Sigmoid colon (tissue), 7 donors: ENCODE measurements at regions of chr11 and their contacts with region 1.

Region 1: GRCh38 chr11:26931248-26931631 is 62.7 kb upstream of the FIBIN start:
- DNase-seq: no peak
- H3K4me3 ChIP-seq: no peak overlapping the region
- H3K27ac ChIP-seq: peak overlapping the region in 3 of 4 donors; percentile 60 to 82 (median 76)
- H3K4me1 ChIP-seq: peaks cover 0 to 36% (median 34%) of the 10 kb centered on the region in 4 donors
- H3K27me3 ChIP-seq: no peaks in the 10 kb centered on the region
- CTCF ChIP-seq: no peak
- EP300 ChIP-seq: no peak
- POLR2A ChIP-seq: no peak

Region 2: DNA sequence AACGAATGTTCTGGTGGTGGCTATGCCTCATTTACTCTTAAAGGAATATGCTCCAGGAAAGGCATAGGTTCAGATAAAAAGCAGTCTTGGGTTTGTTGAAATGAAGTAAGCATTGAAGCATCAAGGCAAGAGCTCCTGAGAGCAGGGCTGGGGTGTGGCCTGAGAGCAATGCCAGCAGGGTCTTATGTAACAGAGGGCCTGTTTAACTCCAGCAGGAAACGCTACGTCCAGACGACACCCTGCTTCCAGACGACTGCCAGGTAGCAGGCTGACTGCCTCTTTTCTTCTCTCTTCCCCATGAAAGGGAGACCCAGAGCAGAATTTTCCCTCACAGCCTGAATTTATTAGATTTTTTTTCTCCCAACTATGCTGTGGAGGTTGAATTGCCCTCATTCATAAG is 82.2 kb before region 1 on chr11:
- intact Hi-C with region 1: loop called (anchors 5 kb)
- DNase-seq: peak; percentile 81
- H3K4me3 ChIP-seq: no peak overlapping the region
- H3K27ac ChIP-seq: peak overlapping the region; percentile 31 to 68 (median 60)
- H3K4me1 ChIP-seq: peaks cover 0 to 50% (median 28%) of the 10 kb centered on the region in 4 donors
- H3K27me3 ChIP-seq: no peaks in the 10 kb centered on the region
- CTCF ChIP-seq: no peak
- EP300 ChIP-seq: no peak
- POLR2A ChIP-seq: no peak

Region 3: GRCh38 chr11:27012234-27012921 is 81.1 kb after region 1 on chr11:
- intact Hi-C with region 1: loop called (anchors 5 kb)
- DNase-seq: no peak
- H3K4me3 ChIP-seq: no peak overlapping the region
- H3K27ac ChIP-seq: peak overlapping the region in 3 of 4 donors; percentile 57 to 71 (median 65)
- H3K4me1 ChIP-seq: peaks cover 0 to 35% (median 31%) of the 10 kb centered on the region in 4 donors
- H3K27me3 ChIP-seq: no peaks in the 10 kb centered on the region
- CTCF ChIP-seq: no peak
- EP300 ChIP-seq: no peak
- POLR2A ChIP-seq: no peak